PC-9 (cell line): ENCODE measurements at regions of chr6 and their contacts with region 1.

Region 1: DNA sequence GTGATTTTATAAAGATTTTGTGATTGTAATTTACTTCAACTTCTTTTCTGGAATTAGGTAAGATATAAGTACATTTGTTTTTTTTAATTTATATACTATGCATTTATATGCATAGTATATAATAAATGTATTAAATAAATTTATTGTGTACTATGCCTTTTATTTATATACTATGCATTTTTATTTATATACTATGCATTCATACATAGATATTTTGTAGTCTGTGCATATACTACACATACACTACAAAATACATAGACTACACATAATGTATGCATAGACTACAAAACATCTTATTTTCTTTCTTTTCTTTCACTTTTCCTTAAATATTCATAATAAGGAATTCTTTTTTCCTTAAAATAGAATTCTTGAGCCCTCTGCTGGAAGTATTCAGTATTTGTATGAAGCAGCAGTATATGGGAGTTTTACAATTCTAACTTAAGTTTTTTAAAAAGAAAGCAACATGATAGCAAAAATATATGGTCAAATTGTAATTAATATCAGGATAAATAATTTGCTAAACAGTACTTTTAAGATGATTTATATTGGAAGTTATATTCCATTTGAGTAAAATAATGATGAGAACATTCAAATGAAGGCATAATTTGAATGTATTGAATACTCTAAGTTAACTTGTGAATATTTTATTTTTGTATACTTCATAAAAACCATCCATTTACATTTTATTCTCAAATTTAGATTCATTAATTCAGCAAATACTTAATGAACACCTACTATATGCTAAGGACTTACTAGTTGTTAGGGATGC is 129.3 kb downstream of the KLHL32 start:
- DNase-seq: no peak
- H3K4me3 ChIP-seq: no peak overlapping the region
- H3K27ac ChIP-seq: no peak overlapping the region
- H3K4me1 ChIP-seq: no peaks in the 10 kb centered on the region
- H3K27me3 ChIP-seq: no peaks in the 10 kb centered on the region
- CTCF ChIP-seq: peak; percentile 87

Region 2: DNA sequence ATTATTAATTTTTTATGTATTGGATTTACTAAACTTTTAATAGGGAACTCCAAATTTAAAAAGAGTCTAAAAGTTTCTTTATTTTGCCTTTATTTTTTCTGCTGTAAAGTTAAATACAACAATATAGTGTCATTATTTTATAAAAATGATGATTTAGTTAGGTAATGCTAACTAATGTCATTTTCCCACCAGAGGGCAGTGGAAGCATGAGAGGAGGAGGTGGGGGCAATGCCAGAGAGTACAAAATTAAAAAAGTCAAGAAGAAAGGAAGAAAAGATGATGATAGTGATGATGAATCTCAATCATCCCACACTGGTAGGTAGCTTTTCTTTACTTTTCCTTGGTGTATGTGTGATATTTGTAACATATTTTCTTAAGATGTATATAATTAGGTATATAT is 511.1 kb before region 1 on chr6:
- CTCF ChIA-PET with region 1: no interaction called
- POLR2A ChIA-PET with region 1: no interaction called
- intact Hi-C with region 1: loop called (anchors 5 kb)
- DNase-seq: no peak
- H3K4me3 ChIP-seq: no peak overlapping the region
- H3K27ac ChIP-seq: no peak overlapping the region
- H3K4me1 ChIP-seq: no peaks in the 10 kb centered on the region
- H3K27me3 ChIP-seq: no peaks in the 10 kb centered on the region
- CTCF ChIP-seq: peak; percentile 60

Region 3: GRCh38 chr6:97195117-97195516 is 141.3 kb after region 1 on chr6:
- CTCF ChIA-PET with region 1: no interaction called
- POLR2A ChIA-PET with region 1: no interaction called
- intact Hi-C with region 1: no loop called
- DNase-seq: no peak
- H3K4me3 ChIP-seq: no peak overlapping the region
- H3K27ac ChIP-seq: no peak overlapping the region
- H3K4me1 ChIP-seq: no peaks in the 10 kb centered on the region
- H3K27me3 ChIP-seq: no peaks in the 10 kb centered on the region
- CTCF ChIP-seq: no peak